MCF 10A (cell line): ENCODE measurements at regions of chr14 and their contacts with region 1.

Region 1: DNA sequence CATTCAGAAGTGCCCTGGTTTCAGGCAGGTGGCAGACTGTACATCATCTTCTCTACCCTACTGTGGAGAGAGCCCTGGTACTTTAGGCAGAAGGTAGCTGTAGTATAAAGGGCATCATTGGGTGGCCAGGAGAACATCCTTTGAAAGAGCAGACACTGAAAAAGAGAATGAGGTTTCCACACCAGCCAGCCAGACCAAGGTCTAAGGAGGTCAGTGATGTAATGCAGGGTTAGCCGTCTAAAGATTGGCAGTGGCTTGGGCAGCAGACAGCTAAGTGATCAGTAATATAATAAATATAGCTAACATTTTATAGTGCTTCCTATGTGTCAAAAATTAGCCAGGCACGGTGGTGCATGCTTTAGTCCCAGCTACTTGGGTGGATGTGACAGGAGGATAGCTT is 12.0 kb downstream of the ZBTB25 start:
- DNase-seq: no peak
- H3K4me3 Mint-ChIP-seq: no peak overlapping the region
- H3K27ac Mint-ChIP-seq: no peak overlapping the region
- H3K4me1 Mint-ChIP-seq: no peaks in the 10 kb centered on the region
- H3K27me3 Mint-ChIP-seq: no peaks in the 10 kb centered on the region
- CTCF ChIP-seq: no peak

Region 2: DNA sequence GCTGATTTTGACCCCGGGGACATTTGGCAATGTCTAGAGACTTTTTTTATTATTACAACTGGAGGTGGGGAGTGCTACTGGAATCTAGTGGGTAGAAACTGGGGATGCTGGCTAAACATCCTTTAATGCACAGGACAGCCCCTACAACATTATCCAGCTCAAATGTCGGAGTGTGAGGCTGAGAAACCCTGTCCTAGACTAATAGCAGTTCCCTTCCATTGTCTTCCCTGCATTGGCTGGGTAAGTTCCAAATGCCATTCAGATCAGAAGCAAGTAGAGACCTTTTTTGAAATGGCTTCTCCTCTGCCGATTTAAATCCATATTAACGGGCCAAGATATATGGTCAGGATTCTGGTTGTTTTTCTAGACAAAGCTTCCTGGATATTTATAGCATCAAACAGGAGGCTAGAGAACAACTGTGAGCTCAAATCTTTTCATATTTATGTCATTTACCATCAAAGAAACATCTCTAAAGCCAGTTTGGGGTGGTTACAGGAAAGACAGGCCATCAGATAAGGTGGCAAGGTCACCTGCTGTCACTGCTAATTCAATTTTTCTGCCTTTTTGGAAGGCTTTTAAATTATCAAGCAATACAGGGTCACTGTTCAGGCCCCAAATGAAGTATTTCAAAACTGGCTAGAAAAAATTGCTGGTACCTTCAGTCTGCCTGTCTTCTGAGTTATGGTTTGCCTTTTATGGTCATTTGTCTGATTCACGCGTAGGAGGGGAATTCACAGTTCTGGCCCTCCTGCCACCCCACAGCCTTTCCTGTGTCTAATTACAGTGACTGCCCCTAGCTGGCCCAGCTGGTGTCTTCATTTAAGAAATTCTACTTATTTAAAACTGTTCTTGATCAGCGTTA is 46.4 kb before region 1 on chr14:
- CTCF ChIA-PET with region 1: no interaction called
- POLR2A ChIA-PET with region 1: no interaction called
- intact Hi-C with region 1: no loop called
- DNase-seq: peak; percentile 64
- H3K4me3 Mint-ChIP-seq: no peak overlapping the region
- H3K27ac Mint-ChIP-seq: no peak overlapping the region
- H3K4me1 Mint-ChIP-seq: no peaks in the 10 kb centered on the region
- H3K27me3 Mint-ChIP-seq: no peaks in the 10 kb centered on the region
- CTCF ChIP-seq: no peak

Region 3: DNA sequence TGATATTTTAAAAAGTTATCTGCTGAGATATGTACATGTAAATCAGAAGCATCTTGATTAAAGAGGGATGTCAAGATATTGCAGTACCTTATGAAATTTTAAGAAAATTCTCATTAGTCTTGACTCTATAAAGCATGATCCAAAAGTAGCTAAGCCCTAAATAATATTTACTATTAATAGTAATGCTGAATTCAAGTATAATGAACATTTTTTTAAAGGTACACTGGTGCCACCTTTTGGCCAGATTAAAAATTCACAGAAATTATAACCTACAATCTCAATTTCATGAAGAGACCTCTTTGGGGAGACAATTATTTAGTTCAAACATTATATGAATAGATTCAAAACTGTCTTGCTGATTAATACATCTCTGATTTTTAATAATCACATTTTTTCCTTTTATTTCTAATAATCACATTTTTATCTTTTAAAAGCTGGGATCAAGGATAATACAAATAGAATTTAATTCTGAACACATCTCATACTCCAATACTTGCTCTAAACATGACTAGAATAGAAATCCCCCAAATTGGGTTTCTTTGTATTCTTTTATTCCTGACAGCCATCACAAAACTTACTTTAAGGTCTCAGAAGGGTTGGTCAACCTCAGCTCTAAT is 12.9 kb before region 1 on chr14:
- CTCF ChIA-PET with region 1: interaction called, 12 read pairs
- POLR2A ChIA-PET with region 1: interaction called, 4 read pairs
- intact Hi-C with region 1: no loop called
- DNase-seq: peak; percentile 40
- H3K4me3 Mint-ChIP-seq: no peak overlapping the region
- H3K27ac Mint-ChIP-seq: no peak overlapping the region
- H3K4me1 Mint-ChIP-seq: peaks cover 6% of the 10 kb centered on the region
- H3K27me3 Mint-ChIP-seq: no peaks in the 10 kb centered on the region
- CTCF ChIP-seq: peak; percentile 35

Region 4: DNA sequence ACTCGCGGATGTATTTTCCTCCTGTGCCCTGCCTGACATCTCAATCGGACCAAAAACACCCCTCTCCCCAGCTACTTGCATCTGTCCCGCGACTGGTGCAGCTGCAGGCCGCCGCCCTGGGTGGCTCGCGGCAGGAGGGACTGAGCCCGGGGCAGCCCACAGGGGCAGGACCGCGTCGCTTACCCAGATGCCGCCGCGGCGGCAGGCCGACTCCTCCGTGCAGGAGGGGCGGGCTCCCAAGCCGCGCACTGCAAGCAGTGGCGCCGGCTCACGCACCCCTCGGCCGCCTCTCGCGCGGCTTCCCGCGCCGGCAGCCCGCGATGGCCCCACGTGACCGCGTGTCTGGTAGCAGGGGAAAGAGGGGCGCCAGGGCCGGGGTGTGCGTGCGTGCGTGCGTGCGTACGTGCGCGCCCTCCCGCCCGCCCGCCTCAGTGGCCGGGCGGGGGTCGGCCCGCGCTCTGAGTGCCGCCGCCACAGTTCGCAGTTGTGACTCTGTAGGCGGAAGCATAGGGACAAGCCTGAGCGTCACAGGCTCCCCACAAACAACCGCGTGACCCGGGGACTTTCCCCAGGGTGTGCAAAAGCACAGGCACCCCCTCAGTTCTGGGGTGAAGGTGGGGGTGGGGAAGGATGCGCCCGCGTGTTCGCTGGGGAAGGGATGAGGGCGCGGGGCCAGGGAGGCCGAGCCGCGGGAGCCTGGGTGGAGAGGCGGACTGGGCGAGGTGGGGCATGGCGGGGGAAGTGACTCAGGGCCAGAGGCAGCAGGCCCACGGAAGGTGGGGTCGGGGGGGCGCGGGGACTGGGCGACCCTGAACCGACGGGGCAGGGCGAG is 12.1 kb after region 1 on chr14 and contains the start of gene ZBTB25:
- CTCF ChIA-PET with region 1: interaction called, 4 read pairs
- POLR2A ChIA-PET with region 1: interaction called, 36 read pairs
- intact Hi-C with region 1: no loop called
- DNase-seq: peak; percentile 90
- H3K4me3 Mint-ChIP-seq: peak within 1 kb of the TSS; percentile 83
- H3K27ac Mint-ChIP-seq: peak within 1 kb of the TSS; percentile 98
- H3K4me1 Mint-ChIP-seq: peaks cover 51% of the 10 kb centered on the region
- H3K27me3 Mint-ChIP-seq: no peaks in the 10 kb centered on the region
- CTCF ChIP-seq: no peak
- total RNA-seq, gene ZBTB25: 11.7 and 15.3 TPM in 2 replicates

Region 5: DNA sequence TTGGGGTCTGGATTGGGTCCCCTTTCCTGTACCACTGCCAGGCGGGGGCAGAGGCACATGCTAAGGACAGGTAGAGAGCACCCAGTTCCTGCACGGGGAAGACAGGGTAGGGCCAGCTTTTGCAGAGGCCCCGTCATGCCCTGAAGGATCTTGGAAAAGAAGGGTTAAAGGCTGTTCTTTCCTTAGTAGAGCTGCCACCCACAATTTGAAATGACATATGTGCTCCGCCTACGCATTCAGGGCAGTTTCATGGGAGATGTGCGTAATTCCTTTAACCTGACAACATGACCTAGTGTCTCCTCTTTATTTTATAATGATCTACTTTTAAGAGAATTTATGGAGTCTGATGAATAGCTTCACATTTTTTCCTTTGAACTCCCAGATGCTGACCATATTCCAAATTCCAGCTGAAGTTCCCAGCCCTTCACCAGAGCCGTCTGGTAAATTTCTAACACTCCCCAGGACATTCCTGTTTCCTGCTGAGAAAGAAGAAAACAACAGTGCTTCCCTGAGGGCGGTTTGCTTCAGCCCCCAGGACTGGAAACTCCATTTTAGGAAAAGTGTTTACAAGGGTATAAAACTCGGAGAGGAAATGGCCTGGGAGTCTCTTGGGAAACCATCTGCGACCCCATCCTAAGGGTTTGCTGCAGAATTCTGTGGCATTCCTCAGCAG is 153.7 kb after region 1 on chr14:
- CTCF ChIA-PET with region 1: no interaction called
- POLR2A ChIA-PET with region 1: no interaction called
- intact Hi-C with region 1: no loop called
- DNase-seq: peak; percentile 74
- H3K4me3 Mint-ChIP-seq: no peak overlapping the region
- H3K27ac Mint-ChIP-seq: peak overlapping the region; percentile 22
- H3K4me1 Mint-ChIP-seq: peaks cover 27% of the 10 kb centered on the region
- H3K27me3 Mint-ChIP-seq: no peaks in the 10 kb centered on the region
- CTCF ChIP-seq: no peak